ENCODE measurements at regions of chr10 and their contacts with region 1.

Region 1: GRCh38 chr10:69807122-69807521 is 5.4 kb downstream of the COL13A1 start:
- DNase-seq: no peak
- H3K4me3 ChIP-seq: no peak overlapping the region
- H3K27ac ChIP-seq: no peak overlapping the region
- H3K4me1 ChIP-seq: peaks cover 0 to 16% (median 9%) of the 10 kb centered on the region in 4 experiments; a peak in 5 of 7 replicates
- H3K27me3 ChIP-seq: peaks cover 10 to 25% (median 20%) of the 10 kb centered on the region in 4 experiments; a peak in 6 of 7 replicates
- CTCF ChIP-seq: no peak
- EP300 ChIP-seq: no peak
- POLR2A ChIP-seq: no peak
- RAD21 ChIP-seq: no peak

Region 2: GRCh38 chr10:69721690-69722310 is 85.3 kb before region 1 on chr10:
- CTCF ChIA-PET with region 1: no interaction called
- POLR2A ChIA-PET with region 1: no interaction called
- DNase-seq: no peak
- H3K4me3 ChIP-seq: no peak overlapping the region
- H3K27ac ChIP-seq: no peak overlapping the region
- H3K4me1 ChIP-seq: peaks cover 0 to 4% (median under 1%) of the 10 kb centered on the region in 4 experiments; a peak in 3 of 7 replicates
- H3K27me3 ChIP-seq: no peaks in the 10 kb centered on the region; a peak in 1 of 7 replicates
- CTCF ChIP-seq: no peak
- EP300 ChIP-seq: no peak
- POLR2A ChIP-seq: no peak
- RAD21 ChIP-seq: no peak

Region 3: DNA sequence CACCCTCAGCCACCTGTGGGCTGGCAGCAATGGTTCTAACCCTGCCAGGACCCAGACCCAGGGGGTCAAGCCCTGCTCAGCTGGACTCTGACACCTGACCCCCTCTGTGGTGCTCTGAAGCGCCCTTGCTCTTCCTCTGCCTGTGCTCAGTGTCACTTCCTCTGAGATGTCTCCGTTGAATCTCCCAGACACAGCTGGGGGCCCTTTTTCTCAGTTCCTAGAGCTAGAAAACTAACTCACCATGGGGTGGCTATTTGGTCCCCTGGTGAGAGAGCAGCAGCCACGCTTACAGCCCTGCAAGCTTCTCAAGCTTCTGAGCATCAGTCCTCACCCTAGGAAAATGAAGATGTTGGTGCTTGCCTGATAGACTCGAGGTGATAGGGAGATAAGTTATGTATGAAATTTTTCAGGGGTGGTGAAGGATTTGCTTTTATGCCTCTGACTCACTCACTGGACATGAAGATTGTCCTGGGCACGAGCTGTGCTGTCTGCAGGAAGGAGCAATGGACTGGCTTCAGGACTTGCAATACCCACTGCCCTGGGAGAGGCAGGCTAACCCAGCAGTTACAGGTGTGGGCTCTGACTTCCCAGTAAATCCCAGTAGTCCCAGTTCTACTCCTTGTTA is 24.2 kb after region 1 on chr10:
- CTCF ChIA-PET with region 1: interaction called, 11 read pairs
- POLR2A ChIA-PET with region 1: interaction called, 3 read pairs
- DNase-seq: no peak
- H3K4me3 ChIP-seq: no peak overlapping the region
- H3K27ac ChIP-seq: no peak overlapping the region
- H3K4me1 ChIP-seq: peaks cover 2 to 19% (median 10%) of the 10 kb centered on the region in 4 experiments; a peak in 5 of 7 replicates
- H3K27me3 ChIP-seq: no peaks in the 10 kb centered on the region
- CTCF ChIP-seq: no peak
- EP300 ChIP-seq: no peak
- POLR2A ChIP-seq: no peak
- RAD21 ChIP-seq: no peak

Region 4: DNA sequence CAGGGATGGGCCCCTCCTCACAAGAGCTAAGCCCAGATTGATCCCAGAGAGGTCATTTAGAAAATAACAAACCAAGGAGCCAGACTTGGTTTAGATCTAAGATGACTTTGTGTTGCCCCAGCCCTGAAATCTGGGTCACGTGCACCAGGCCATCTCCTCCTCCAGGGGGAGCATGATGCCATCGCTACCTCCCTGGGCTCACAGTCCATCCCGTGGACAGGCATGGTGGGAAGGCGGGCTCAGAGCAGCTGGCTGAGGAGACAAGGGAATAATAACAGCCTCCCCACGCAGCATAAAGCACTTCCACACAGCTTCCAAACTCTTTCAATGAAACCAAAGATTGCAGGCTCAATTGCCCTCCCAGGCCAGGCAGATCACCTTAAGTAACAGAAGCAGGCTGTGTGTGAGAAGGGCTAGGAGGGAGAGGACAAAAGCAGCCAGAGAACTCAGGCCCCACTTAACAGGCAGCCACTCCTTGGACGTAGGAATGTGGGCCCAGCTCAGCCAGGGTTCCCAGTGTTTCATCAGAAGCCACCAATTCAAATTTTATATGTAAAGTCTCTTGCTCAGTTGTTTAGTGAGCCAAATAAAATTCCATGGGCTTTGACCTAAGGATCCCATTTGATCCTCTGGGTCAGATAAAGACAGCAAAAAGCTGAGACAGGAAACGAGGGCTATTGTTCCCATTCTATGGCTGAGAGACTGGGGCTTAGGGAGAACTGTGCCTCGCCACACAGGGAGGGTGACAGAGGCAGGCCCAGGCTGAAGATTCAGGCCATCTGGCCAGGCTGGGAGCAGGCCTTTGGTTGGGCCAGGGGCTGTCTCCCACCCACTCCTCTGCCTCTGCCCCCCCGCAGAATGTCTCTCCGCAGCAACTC is 94.7 kb after region 1 on chr10:
- CTCF ChIA-PET with region 1: interaction called, 17 read pairs
- POLR2A ChIA-PET with region 1: no interaction called
- DNase-seq: peak; percentile 31 to 71
- H3K4me3 ChIP-seq: no peak overlapping the region
- H3K27ac ChIP-seq: no peak overlapping the region
- H3K4me1 ChIP-seq: peaks cover 0 to 15% (median 7%) of the 10 kb centered on the region in 4 experiments; a peak in 3 of 7 replicates
- H3K27me3 ChIP-seq: no peaks in the 10 kb centered on the region
- CTCF ChIP-seq: peak; percentile 72 to 96 (median 89)
- EP300 ChIP-seq: no peak
- POLR2A ChIP-seq: no peak
- RAD21 ChIP-seq: peak; percentile 52 to 73